IMR-90 (cell line): ENCODE measurements at regions of chr9 and their contacts with region 1.

Region 1: DNA sequence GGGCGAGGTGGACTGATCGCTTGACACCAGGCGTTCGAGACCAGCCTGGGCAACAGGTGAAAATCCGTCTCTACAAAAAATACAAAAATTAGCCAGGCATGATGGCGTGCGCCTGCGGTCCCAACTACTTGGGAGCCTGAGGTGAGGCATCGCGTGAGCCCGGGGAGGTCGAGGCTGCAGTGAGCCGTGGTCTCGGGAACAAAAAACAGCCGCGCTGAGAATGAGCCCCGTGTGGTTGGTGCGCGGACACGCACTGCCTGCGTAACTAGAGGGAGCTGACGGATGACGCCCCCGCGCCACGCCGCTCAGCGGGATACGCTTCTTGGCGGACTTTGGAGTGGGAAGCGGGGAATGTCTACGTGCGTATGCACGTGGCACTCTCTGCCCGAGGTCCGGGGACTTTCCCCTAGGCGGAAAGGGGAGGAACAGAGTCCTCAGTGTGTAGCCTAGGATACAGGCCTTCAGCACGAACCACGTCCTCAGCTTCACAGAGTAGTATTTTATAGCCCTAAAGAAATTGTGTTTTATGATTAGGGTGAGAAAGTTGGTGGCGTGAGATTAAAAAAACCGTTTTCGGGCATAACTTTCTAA is at the start of gene RMRP:
- DNase-seq: peak; percentile 100
- ATAC-seq: peak; percentile 86
- H3K4me3 ChIP-seq: peak within 1 kb of the TSS; percentile 78
- H3K27ac ChIP-seq: peak within 1 kb of the TSS; percentile 88
- H3K4me1 ChIP-seq: peaks cover 10% of the 10 kb centered on the region
- H3K27me3 ChIP-seq: no peaks in the 10 kb centered on the region
- CTCF ChIP-seq: peak; percentile 20; the same call in 1 of the 2 replicates
- POLR2A ChIP-seq: no peak; the same call in 1 of the 2 replicates
- RAD21 ChIP-seq: peak; percentile 28; the same call in 1 of the 2 replicates
- total RNA-seq, gene RMRP: 13,690 and 21,707 TPM in 2 replicates

Region 2: DNA sequence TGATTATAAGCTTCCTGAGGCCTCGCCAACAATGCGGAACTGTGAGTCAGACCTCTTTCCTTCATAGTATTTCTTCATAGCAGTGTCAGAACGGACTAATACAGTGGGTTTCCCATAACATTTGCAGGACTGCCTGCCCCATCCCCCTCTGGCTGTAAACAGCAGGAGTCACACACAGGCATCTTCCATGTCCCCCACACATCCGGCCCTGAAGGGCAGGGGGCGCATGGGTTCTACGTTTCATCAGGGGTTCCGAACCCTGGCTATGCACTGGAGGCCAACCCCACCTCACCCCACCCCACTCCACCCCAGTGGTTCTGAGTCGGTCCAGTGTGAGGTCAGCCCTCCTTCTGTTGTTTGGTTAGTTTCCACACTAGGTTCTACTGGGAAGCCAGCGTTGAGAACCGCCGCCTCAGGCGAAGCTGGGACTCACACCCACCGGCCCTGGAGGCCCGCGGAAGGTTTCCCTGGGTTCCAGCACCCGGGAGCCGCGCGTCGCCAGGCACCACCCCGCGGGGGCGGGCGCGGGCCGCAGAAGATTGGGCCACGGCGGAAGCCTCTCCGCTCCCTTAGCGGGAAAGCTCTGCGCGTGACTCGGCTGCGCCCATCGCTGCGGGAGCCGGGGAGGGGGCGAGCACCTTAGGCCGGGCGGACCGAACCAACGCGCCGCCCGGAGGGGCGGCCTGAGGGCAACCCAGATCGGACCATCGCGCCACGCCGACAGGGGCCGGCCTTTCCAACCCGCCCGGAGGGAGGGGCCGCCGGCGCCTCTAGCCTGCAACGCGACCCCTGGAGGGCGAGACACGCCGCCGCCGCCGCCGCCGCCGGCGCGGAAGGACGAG is 168.1 kb before region 1 on chr9 and contains the start of gene RUSC2:
- CTCF ChIA-PET with region 1: no interaction called
- POLR2A ChIA-PET with region 1: no interaction called
- dilution Hi-C with region 1: no loop called
- in situ Hi-C with region 1: no loop called
- intact Hi-C with region 1: loop called (anchors 10 kb)
- DNase-seq: peak; percentile 90
- ATAC-seq: peak; percentile 85
- H3K4me3 ChIP-seq: peak within 1 kb of the TSS; percentile 89
- H3K27ac ChIP-seq: peak within 1 kb of the TSS; percentile 96
- H3K4me1 ChIP-seq: peaks cover 3% of the 10 kb centered on the region
- H3K27me3 ChIP-seq: no peaks in the 10 kb centered on the region
- CTCF ChIP-seq: peak; percentile 41
- POLR2A ChIP-seq: peak; percentile 68
- RAD21 ChIP-seq: peak; percentile 52
- total RNA-seq, gene RUSC2: 17.4 and 18.3 TPM in 2 replicates

Region 3: GRCh38 chr9:35603987-35604577 is 53.6 kb before region 1 on chr9:
- CTCF ChIA-PET with region 1: interaction called, 3 read pairs
- POLR2A ChIA-PET with region 1: no interaction called
- dilution Hi-C with region 1: no loop called
- in situ Hi-C with region 1: no loop called
- intact Hi-C with region 1: loop called (anchors 5 kb)
- DNase-seq: peak; percentile 99
- ATAC-seq: peak; percentile 94
- H3K4me3 ChIP-seq: peak overlapping the region; percentile 53
- H3K27ac ChIP-seq: peak overlapping the region; percentile 75
- H3K4me1 ChIP-seq: peaks cover 5% of the 10 kb centered on the region
- H3K27me3 ChIP-seq: no peaks in the 10 kb centered on the region
- CTCF ChIP-seq: peak; percentile 82
- POLR2A ChIP-seq: peak; percentile 85
- RAD21 ChIP-seq: peak; percentile 62

Region 4: GRCh38 chr9:35675732-35676392 is 18.2 kb after region 1 on chr9:
- CTCF ChIA-PET with region 1: interaction called, 11 read pairs
- POLR2A ChIA-PET with region 1: interaction called, 11 read pairs
- dilution Hi-C with region 1: no loop called
- in situ Hi-C with region 1: no loop called
- intact Hi-C with region 1: no loop called
- DNase-seq: no peak
- ATAC-seq: no peak; the same call in 1 of the 2 replicates
- H3K4me3 ChIP-seq: peak overlapping the region; percentile 12; the same call in 1 of the 2 replicates
- H3K27ac ChIP-seq: no peak overlapping the region; the same call in 1 of the 2 replicates
- H3K4me1 ChIP-seq: peaks cover 19% of the 10 kb centered on the region
- H3K27me3 ChIP-seq: no peaks in the 10 kb centered on the region
- CTCF ChIP-seq: no peak
- POLR2A ChIP-seq: no peak
- RAD21 ChIP-seq: no peak

Region 5: DNA sequence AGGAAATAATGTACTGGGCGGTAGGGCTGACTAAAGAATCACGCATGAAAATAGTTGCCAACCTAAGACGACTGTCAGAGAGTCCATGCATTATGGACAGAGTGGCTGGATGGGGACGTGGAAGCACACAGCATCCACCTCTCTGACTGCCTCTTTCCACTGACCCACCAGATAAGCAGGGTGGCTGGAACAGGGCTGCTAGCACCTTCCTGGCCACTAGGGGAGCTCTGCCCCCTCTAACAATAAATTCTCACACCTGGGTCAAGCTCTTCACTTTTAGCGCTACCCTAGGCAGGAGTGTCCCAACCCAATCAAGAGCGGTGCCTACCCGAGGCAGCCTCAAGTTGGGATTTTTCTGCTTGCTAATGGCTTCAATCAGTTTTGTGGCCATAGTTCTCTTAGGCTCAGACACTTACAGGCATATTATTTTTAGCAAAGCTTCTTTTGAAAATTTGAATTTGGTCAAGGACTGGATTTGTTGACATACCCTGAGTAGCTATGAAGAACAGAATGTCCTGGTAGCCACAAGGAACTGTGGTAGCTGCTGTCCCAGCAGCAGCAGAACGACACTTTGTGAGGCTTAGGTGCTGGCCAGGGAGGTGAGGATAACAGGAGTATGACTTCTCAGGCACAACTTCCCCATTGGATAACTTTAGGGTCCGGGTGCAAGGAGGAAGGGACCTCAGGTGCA is 39.0 kb after region 1 on chr9:
- CTCF ChIA-PET with region 1: interaction called, 11 read pairs
- POLR2A ChIA-PET with region 1: interaction called, 5 read pairs
- dilution Hi-C with region 1: no loop called
- in situ Hi-C with region 1: no loop called
- intact Hi-C with region 1: loop called (anchors 5 kb)
- DNase-seq: peak; percentile 40
- ATAC-seq: peak; percentile 60
- H3K4me3 ChIP-seq: no peak overlapping the region
- H3K27ac ChIP-seq: no peak overlapping the region
- H3K4me1 ChIP-seq: peaks cover 7% of the 10 kb centered on the region; the same call in 1 of the 2 replicates
- H3K27me3 ChIP-seq: no peaks in the 10 kb centered on the region
- CTCF ChIP-seq: peak; percentile 71
- POLR2A ChIP-seq: no peak
- RAD21 ChIP-seq: peak; percentile 52

Region 6: GRCh38 chr9:35814841-35815543 is 157.4 kb after region 1 on chr9 and contains the start of gene HINT2:
- CTCF ChIA-PET with region 1: no interaction called
- POLR2A ChIA-PET with region 1: no interaction called
- dilution Hi-C with region 1: no loop called
- in situ Hi-C with region 1: no loop called
- intact Hi-C with region 1: loop called (anchors 10 kb)
- DNase-seq: peak; percentile 99
- ATAC-seq: peak; percentile 94
- H3K4me3 ChIP-seq: peak within 1 kb of the TSS; percentile 76
- H3K27ac ChIP-seq: peak within 1 kb of the TSS; percentile 83
- H3K4me1 ChIP-seq: no peaks in the 10 kb centered on the region; the same call in 1 of the 2 replicates
- H3K27me3 ChIP-seq: peaks cover 6% of the 10 kb centered on the region; the same call in 1 of the 2 replicates
- CTCF ChIP-seq: no peak
- POLR2A ChIP-seq: peak; percentile 41; the same call in 1 of the 2 replicates
- RAD21 ChIP-seq: no peak
- total RNA-seq, gene HINT2: 6.7 and 7.5 TPM in 2 replicates

Region 7: GRCh38 chr9:35871497-35871896 is 213.9 kb after region 1 on chr9:
- CTCF ChIA-PET with region 1: no interaction called
- POLR2A ChIA-PET with region 1: no interaction called
- dilution Hi-C with region 1: no loop called
- in situ Hi-C with region 1: no loop called
- intact Hi-C with region 1: no loop called
- DNase-seq: no peak
- ATAC-seq: no peak
- H3K4me3 ChIP-seq: no peak overlapping the region
- H3K27ac ChIP-seq: no peak overlapping the region
- H3K4me1 ChIP-seq: no peaks in the 10 kb centered on the region
- H3K27me3 ChIP-seq: peaks cover 7% of the 10 kb centered on the region; the same call in 1 of the 2 replicates
- CTCF ChIP-seq: no peak
- POLR2A ChIP-seq: no peak
- RAD21 ChIP-seq: no peak